H1 (cell line): ENCODE measurements at regions of chr6 and their contacts with region 1.

Region 1: GRCh38 chr6:37607944-37608343 is 89.7 kb downstream of the MDGA1 start:
- DNase-seq: no peak
- H3K4me3 ChIP-seq: no peak overlapping the region
- H3K27ac ChIP-seq: no peak overlapping the region
- H3K4me1 ChIP-seq: no peaks in the 10 kb centered on the region
- H3K27me3 ChIP-seq: no peaks in the 10 kb centered on the region
- CTCF ChIP-seq: peak in 2 of 3 experiments; percentile 32 to 37; a peak in 2 of 4 replicates
- EP300 ChIP-seq: no peak
- POLR2A ChIP-seq: no peak
- RAD21 ChIP-seq: peak; percentile 8 to 56; a peak in 3 of 4 replicates

Region 2: DNA sequence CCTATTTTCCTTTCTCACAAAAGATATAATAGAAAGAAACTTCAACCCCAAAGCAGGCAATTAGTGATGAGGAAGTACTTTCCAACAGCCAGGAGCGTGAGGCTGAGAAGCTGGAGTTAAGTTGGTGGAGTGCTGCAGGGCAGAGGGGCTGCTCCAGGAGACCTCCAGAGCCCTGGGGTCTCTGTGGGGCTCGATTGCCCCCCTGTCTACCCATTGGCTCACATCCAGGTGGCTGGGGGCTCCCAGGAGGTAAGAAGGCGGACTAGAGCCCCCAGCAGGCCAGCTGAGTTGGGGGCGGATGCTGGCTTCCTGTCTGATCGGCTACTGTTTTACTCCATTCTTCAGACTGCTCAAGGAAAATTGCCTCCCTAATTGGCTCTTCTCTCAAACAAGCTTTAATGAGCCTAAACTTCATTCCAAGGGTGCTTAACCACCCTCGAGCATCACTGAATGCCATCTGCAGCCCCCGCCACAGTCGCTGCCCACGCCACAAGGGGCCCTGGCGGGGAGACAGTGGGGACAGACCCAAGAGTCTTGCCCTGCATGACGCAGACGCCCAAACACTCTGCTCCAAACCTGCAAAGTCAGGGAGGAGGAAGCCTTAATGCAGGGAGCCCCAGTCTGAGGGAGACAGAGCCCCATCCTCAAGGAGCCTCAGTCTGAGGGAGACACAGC is 11.1 kb after region 1 on chr6:
- CTCF ChIA-PET with region 1: interaction called, 13 read pairs
- POLR2A ChIA-PET with region 1: no interaction called
- DNase-seq: no peak
- H3K4me3 ChIP-seq: no peak overlapping the region
- H3K27ac ChIP-seq: no peak overlapping the region
- H3K4me1 ChIP-seq: peaks cover 0 to 3% (median under 1%) of the 10 kb centered on the region in 4 experiments; a peak in 3 of 7 replicates
- H3K27me3 ChIP-seq: no peaks in the 10 kb centered on the region; a peak in 1 of 7 replicates
- CTCF ChIP-seq: no peak
- EP300 ChIP-seq: no peak
- POLR2A ChIP-seq: no peak
- RAD21 ChIP-seq: no peak